Gastrocnemius medialis (tissue), 4 donors: ENCODE measurements at regions of chr11 and their contacts with region 1.

Region 1: DNA sequence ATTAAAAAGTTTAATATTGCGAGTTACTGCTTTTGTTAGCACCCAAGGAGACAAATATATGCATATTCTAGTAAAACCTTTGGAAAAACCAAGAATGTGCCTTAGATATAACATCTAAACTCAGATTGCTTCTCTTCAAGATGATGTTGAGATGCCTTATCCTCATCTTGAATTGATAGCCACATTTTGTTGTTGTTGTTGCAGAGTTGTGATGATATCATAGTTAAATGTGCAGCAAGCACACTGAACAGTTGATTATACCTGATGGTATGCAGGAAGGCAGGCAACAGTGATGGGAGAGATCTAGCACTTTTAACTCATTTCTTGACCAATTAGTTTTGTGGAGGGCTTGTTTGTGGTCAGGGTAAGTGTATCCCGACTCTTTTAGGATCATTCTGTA is 48.0 kb downstream of the KDM2A start:
- DNase-seq: no peak
- ATAC-seq: no peak
- H3K4me3 ChIP-seq: no peak overlapping the region
- H3K27ac ChIP-seq: peak overlapping the region; percentile 69 to 76 (median 72)
- H3K4me1 ChIP-seq: peaks cover 34 to 44% of the 10 kb centered on the region in 2 donors
- H3K27me3 ChIP-seq: no peaks in the 10 kb centered on the region
- CTCF ChIP-seq: no peak
- POLR2A ChIP-seq: no peak

Region 2: GRCh38 chr11:67053896-67054842 is 112.9 kb before region 1 on chr11:
- in situ Hi-C with region 1: no loop called
- intact Hi-C with region 1: loop called (anchors 5 kb)
- DNase-seq: peak; percentile 47 to 67
- ATAC-seq: peak; percentile 50 to 67
- H3K4me3 ChIP-seq: no peak overlapping the region
- H3K27ac ChIP-seq: peak overlapping the region; percentile 73 to 90 (median 84)
- H3K4me1 ChIP-seq: peaks cover 14 to 28% of the 10 kb centered on the region in 2 donors
- H3K27me3 ChIP-seq: no peaks in the 10 kb centered on the region
- CTCF ChIP-seq: peak; percentile 36 to 79 (median 69)
- POLR2A ChIP-seq: peak in 1 of 2 donors; percentile 43

Region 3: DNA sequence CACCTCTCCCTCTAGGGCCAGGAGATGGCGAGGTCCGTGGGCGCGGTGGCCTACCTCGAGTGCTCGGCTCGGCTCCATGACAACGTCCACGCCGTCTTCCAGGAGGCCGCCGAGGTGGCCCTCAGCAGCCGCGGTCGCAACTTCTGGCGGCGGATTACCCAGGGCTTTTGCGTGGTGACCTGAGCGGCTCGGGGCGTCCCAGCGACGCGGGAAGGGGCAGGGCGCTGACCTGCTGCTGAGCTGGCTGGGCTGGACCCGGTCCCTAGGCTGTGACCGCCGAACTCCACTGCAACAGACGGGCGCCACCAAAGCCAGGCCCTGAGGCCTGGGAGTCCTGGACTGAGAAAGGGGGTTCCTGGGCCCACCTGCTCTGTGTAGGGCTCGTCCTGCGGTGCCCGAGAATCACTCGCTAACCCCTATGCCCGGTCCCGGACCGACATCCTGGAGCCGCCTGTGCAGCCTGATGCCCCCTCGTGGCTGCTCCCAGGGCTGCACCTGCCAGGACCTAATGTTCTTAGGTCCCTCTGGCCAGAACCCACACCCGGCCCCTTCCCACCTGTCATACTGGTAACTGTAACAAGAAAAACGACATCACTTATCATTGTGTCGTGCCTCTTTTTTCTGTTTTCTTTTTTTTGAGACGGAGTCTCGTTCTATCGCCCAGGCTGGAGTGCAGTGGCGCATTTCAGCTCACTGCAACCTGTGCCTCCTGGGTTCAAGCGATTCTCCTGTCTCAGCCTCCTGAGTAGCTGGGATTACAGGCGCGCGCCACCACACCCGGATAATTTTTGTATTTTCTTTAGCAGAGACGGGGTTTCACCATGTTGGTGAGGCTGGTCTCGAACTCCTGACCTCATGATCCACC is 95.4 kb before region 1 on chr11:
- in situ Hi-C with region 1: loop called in 1 of 4 experiments (anchors 5 kb)
- intact Hi-C with region 1: no loop called
- DNase-seq: peak; percentile 49 to 66
- ATAC-seq: peak; percentile 87 to 88
- H3K4me3 ChIP-seq: peak overlapping the region; percentile 32 to 59 (median 43)
- H3K27ac ChIP-seq: peak overlapping the region in 1 of 4 donors; percentile 20
- H3K4me1 ChIP-seq: no peaks in the 10 kb centered on the region
- H3K27me3 ChIP-seq: no peaks in the 10 kb centered on the region
- CTCF ChIP-seq: peak; percentile 72 to 91 (median 85)
- POLR2A ChIP-seq: no peak

Region 4: GRCh38 chr11:67082035-67082791 is 84.9 kb before region 1 on chr11:
- in situ Hi-C with region 1: loop called in 1 of 4 experiments (anchors 10 kb)
- intact Hi-C with region 1: loop called (anchors 5 kb)
- DNase-seq: no peak
- ATAC-seq: peak in 1 of 2 donors; percentile 6
- H3K4me3 ChIP-seq: no peak overlapping the region
- H3K27ac ChIP-seq: no peak overlapping the region
- H3K4me1 ChIP-seq: no peaks in the 10 kb centered on the region
- H3K27me3 ChIP-seq: no peaks in the 10 kb centered on the region
- CTCF ChIP-seq: no peak
- POLR2A ChIP-seq: no peak

Region 5: GRCh38 chr11:67099831-67100324 is 67.2 kb before region 1 on chr11:
- in situ Hi-C with region 1: no loop called
- intact Hi-C with region 1: no loop called
- DNase-seq: no peak
- ATAC-seq: no peak
- H3K4me3 ChIP-seq: no peak overlapping the region
- H3K27ac ChIP-seq: no peak overlapping the region
- H3K4me1 ChIP-seq: no peaks in the 10 kb centered on the region
- H3K27me3 ChIP-seq: no peaks in the 10 kb centered on the region
- CTCF ChIP-seq: no peak
- POLR2A ChIP-seq: no peak

Region 6: DNA sequence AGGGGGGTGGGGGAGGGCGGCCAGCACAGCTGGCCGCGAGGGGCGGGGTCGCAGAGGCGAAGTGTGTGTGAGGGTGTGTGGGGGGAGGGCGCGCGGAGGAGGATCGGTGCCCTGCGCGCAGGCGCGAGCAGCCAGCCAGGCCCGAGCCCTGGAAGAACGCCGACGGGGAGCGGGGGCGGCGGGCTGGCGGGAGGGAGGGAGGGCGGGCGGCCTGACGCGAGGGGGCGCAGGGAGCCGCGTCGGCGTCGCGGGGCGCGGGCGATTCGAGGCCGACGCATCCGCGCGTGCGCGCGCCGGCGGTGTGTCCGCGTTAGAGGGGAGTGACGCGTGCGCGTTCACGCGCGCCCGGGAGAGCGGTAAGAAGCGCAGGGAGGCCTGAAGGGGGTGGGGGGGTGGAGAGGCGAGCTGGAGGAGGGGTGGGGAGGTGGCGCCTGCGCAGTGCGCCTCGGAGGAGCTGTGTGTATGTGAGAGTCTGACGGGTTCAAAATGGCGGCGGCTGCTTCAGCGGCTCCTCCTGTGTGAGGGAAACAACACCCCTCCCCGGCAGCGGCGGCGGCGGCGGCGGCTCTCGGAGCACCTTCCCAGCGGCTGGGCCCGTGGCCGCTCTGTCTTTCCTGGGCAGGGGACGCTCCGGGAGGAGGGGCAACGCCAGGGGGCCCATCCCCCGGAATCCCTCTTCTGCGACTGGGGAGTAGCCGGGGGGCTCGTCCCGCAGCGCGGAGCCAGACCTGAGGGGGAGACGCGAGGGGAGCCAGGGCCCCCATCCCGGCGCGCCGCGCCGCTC is 48.1 kb before region 1 on chr11 and contains the start of gene KDM2A:
- in situ Hi-C with region 1: no loop called
- intact Hi-C with region 1: loop called (anchors 1 kb)
- DNase-seq: peak; percentile 99
- ATAC-seq: peak; percentile 82 to 85
- H3K4me3 ChIP-seq: peak within 1 kb of the TSS; percentile 82 to 98 (median 94)
- H3K27ac ChIP-seq: peak within 1 kb of the TSS; percentile 98 to 100 (median 99)
- H3K4me1 ChIP-seq: peaks cover 26 to 35% of the 10 kb centered on the region in 2 donors
- H3K27me3 ChIP-seq: no peaks in the 10 kb centered on the region
- CTCF ChIP-seq: peak in 1 of 5 experiments; percentile 27
- POLR2A ChIP-seq: peak; percentile 73 to 84
- total RNA-seq, gene KDM2A: 34.8 to 55.0 (median 44.9) TPM